ENCODE measurements at regions of chr16 and their contacts with region 1.

Region 1: GRCh38 chr16:14300705-14301168 is 229.6 kb downstream of the MRTFB start:
- DNase-seq: peak; percentile 59
- H3K4me3 Mint-ChIP-seq: peak overlapping the region; percentile 55
- H3K27ac Mint-ChIP-seq: no peak overlapping the region
- H3K4me1 Mint-ChIP-seq: peaks cover 8% of the 10 kb centered on the region
- H3K27me3 Mint-ChIP-seq: peaks cover 10% of the 10 kb centered on the region

Region 2: GRCh38 chr16:14529010-14529669 is 228.4 kb after region 1 on chr16:
- CTCF ChIA-PET with region 1: interaction called, 16 read pairs
- POLR2A ChIA-PET with region 1: no interaction called
- intact Hi-C with region 1: loop called (anchors 1 kb)
- DNase-seq: peak; percentile 64
- H3K4me3 Mint-ChIP-seq: no peak overlapping the region
- H3K27ac Mint-ChIP-seq: no peak overlapping the region
- H3K4me1 Mint-ChIP-seq: no peaks in the 10 kb centered on the region
- H3K27me3 Mint-ChIP-seq: no peaks in the 10 kb centered on the region

Region 3: DNA sequence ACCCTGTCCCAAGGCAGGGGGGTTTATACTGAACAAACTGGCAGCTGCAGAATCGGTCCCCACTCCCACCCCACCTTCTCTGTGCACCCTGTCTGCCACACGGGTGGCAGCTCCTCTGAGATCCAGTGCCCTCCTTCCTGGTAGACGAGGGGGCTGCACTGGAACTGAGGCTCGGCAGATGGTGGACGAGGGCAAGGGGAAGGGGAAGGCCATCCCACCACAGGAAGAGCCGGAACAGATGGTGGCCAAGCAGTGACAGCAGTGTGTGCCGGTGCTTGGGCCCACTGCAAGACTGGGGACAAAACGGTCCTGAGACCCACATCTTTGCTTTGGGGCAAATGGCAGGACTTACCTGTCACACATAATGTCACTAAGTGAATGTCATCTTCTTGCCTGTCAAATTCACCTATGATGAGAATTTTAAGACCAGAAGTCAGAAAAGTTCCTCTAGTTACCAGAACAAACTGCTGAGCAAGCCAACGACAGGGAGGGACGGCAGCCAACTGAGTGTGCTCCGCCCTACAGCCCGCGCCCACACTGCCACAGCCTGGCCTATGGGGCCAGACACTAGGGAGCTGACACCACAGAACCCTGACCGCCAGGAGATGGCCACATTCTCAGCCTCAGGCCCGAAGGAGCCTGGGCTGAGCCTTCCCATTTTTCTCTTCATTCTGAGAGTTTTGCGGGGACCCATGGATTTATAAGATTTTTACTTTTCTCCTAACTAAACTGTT is 740.7 kb after region 1 on chr16:
- CTCF ChIA-PET with region 1: no interaction called
- POLR2A ChIA-PET with region 1: no interaction called
- intact Hi-C with region 1: no loop called
- DNase-seq: no peak
- H3K4me3 Mint-ChIP-seq: no peak overlapping the region
- H3K27ac Mint-ChIP-seq: no peak overlapping the region
- H3K4me1 Mint-ChIP-seq: no peaks in the 10 kb centered on the region
- H3K27me3 Mint-ChIP-seq: no peaks in the 10 kb centered on the region